ENCODE measurements at regions of chr4 and their contacts with region 1.

Region 1: DNA sequence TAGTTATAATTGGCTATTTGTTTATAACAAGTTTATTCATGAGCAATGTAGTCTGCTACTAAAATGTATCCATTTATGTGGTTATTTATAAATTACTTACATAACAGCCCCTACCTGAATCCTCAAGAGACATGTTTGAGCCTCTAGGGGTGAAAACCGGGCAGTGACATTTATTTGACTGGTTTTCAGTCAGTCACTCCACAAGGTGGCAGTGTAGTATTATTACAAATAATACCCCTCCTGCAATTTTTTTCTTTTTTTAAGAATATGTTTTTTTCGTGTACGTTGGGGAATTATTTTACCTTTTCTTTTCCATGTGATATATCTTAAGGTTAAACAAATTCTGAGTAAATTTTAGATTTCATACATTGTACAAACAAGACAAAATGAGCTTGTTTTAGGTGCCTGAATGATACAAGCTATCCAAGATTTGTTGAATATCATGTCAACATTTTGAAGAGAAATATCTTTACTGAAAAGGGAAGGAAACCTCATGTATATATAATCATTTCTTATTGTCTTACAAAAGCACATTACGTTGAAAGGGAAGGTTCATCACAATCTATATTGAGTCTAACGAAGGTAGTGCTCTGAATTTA is 598.7 kb upstream of the TECRL start:
- DNase-seq: peak; percentile 86
- ATAC-seq: peak; percentile 63
- H3K4me3 ChIP-seq: no peak overlapping the region
- H3K27ac ChIP-seq: no peak overlapping the region
- H3K4me1 ChIP-seq: no peaks in the 10 kb centered on the region
- H3K27me3 ChIP-seq: no peaks in the 10 kb centered on the region
- CTCF ChIP-seq: peak; percentile 91

Region 2: GRCh38 chr4:64617800-64618199 is 390.1 kb before region 1 on chr4:
- CTCF ChIA-PET with region 1: no interaction called
- POLR2A ChIA-PET with region 1: no interaction called
- intact Hi-C with region 1: loop called (anchors 5 kb)
- DNase-seq: peak; percentile 77
- ATAC-seq: peak; percentile 67
- H3K4me3 ChIP-seq: no peak overlapping the region
- H3K27ac ChIP-seq: no peak overlapping the region
- H3K4me1 ChIP-seq: peaks cover 4% of the 10 kb centered on the region; the same call in 1 of the 2 replicates
- H3K27me3 ChIP-seq: no peaks in the 10 kb centered on the region
- CTCF ChIP-seq: peak; percentile 80

Region 3: GRCh38 chr4:64713256-64713840 is 294.6 kb before region 1 on chr4:
- CTCF ChIA-PET with region 1: no interaction called
- POLR2A ChIA-PET with region 1: no interaction called
- intact Hi-C with region 1: loop called (anchors 10 kb)
- DNase-seq: peak; percentile 81
- ATAC-seq: peak; percentile 52
- H3K4me3 ChIP-seq: no peak overlapping the region
- H3K27ac ChIP-seq: no peak overlapping the region
- H3K4me1 ChIP-seq: peaks cover 2% of the 10 kb centered on the region; the same call in 1 of the 2 replicates
- H3K27me3 ChIP-seq: no peaks in the 10 kb centered on the region
- CTCF ChIP-seq: peak; percentile 82

Region 4: DNA sequence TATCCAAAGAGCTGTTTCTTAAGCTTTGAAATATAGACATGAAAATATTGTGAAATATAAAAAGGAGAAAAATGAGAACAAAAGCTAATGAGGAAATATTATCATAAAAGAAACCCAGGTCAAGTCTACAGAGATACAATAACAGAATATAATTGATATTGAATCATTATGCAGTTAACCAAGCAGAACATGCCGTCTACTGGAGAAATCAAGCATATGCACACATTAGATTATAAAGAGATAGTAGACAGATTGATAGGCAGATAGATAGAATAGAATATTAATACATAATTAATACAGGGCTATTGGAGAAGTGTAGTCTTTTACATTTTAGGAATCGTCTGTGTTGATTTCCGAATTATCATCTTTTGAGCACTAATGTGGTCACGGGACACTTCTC is 453.8 kb after region 1 on chr4:
- CTCF ChIA-PET with region 1: no interaction called
- POLR2A ChIA-PET with region 1: no interaction called
- intact Hi-C with region 1: loop called (anchors 5 kb)
- DNase-seq: peak; percentile 32
- ATAC-seq: no peak; the same call in 1 of the 2 replicates
- H3K4me3 ChIP-seq: no peak overlapping the region
- H3K27ac ChIP-seq: no peak overlapping the region
- H3K4me1 ChIP-seq: peaks cover 7% of the 10 kb centered on the region
- H3K27me3 ChIP-seq: no peaks in the 10 kb centered on the region
- CTCF ChIP-seq: peak; percentile 64